GM13976 (cell line): ENCODE measurements at regions of chrX and their contacts with region 1.

Region 1: DNA sequence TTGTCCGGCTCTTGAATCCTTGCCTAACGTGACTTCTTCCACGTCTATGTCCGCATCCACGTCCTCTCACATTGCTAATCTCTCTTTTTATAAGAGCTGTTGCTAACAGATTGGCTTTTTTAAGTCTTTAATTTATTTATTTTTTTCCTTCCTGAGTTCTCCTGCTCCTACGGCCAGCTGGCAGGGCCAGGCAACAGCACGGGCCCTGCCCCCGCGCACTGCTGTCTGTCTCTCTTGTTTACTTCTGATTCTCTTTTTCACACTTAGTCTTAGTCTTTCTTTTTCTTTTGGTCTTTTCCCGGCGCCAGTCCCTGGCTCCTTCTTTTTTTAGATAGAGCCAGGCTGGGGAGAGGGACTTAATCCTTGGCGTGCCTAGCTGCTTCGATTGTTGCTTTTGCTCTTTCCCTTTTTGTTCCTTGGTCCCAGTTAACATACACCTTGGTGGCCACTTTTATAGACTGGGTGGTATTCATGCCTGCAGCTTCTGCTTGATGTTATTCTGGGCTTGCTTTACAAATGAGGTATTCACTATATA is 53.2 kb upstream of the RBMX start:
- DNase-seq: no peak
- CTCF ChIP-seq: no peak

Region 2: DNA sequence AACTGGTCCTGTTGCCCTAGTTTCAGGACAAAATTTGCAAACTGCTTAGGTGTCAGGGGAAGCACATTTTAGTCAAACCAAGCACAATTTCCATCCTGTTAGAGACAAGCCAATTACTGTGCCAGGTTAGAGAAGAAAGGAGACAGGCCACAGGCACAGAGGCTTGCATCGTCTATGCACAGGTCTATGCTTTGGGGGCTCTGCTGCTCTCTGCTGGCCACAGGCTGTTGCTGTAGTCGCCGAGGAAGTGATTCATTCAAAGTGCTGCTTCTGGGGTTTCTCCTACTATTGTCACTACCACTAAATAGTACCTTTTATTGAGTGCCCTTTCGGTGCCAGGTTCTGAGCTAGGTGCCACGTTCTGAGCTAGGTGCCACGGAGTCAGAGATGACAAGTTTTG is 356.1 kb before region 1 on chrX:
- in situ Hi-C with region 1: loop called (anchors 25 kb)
- DNase-seq: peak; percentile 12
- CTCF ChIP-seq: peak; percentile 55